Thyroid gland (tissue), 4 donors: ENCODE measurements at regions of chr4 and their contacts with region 1.

Region 1: GRCh38 chr4:76758290-76758882 is 139.6 kb downstream of the SOWAHB start:
- DNase-seq: peak; percentile 27 to 29
- H3K4me3 ChIP-seq: no peak overlapping the region
- H3K27ac ChIP-seq: no peak overlapping the region
- H3K4me1 ChIP-seq: peaks cover 0 to 6% of the 10 kb centered on the region in 2 donors
- H3K27me3 ChIP-seq: no peaks in the 10 kb centered on the region
- CTCF ChIP-seq: peak; percentile 30 to 78 (median 55)
- POLR2A ChIP-seq: no peak

Region 2: DNA sequence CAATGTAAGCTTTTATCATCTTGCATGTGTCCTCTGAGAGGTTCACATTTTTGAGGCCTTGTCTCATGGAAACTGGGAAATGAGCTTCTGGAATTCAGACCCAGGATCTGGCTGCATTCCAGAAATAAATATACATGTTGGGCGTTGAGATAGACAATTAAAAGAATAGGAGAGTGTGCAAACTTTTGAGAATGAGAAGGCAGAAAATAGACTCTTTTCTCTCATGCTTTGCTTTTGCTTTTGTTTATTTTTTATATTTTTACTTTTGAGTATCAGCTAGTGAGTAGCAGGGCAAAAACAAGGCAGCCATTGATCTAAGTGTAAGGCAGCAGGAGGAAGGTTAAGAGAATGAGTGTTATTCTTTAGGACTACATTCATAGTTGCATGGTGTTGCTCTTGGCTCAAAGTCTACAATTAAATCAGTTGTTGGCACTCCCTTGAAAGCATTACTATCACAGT is 311.0 kb before region 1 on chr4:
- intact Hi-C with region 1: loop called (anchors 10 kb)
- DNase-seq: no peak
- H3K4me3 ChIP-seq: no peak overlapping the region
- H3K27ac ChIP-seq: no peak overlapping the region
- H3K4me1 ChIP-seq: peaks cover 0 to 7% of the 10 kb centered on the region in 2 donors
- H3K27me3 ChIP-seq: no peaks in the 10 kb centered on the region
- CTCF ChIP-seq: no peak
- POLR2A ChIP-seq: no peak

Region 3: DNA sequence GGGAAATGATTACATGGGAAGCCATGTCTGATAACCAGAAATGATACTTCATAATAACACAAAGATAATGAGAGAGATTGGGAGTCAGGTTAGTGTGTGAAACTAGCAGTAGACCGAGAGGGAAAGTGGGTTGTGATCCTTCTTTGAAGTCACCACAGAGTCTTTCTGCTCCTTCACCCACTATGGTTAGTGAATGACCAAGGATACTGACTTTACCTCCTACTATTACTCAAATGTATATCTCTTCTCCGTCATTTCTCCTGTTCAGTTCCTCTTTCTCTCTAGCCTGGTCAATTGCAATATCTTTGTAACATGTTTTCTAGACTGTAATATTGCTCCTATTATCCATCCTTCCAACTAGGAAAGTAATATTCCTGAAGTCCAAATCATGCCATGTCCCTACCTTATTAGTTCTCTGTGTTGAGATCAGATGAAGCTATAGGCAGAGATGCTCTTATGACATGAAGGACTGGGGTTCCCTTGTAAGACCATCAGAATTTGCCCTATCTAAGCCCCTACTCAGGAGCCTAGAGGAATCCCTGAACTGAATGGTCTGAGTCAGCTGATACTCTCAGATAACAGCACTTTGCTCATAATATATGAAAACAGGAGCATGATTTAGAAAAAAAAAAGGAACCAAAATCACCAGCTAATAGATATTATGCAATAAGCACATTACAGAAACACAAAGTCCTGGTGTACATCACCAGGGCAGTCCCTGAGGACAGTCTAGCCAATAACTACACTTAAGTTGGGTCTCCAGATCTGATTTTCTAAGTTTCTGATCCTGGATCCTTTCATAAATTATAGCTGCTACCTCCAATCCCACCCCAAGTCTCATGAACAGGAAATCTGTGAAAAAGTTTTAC is 242.2 kb before region 1 on chr4:
- intact Hi-C with region 1: loop called (anchors 10 kb)
- DNase-seq: no peak
- H3K4me3 ChIP-seq: no peak overlapping the region
- H3K27ac ChIP-seq: no peak overlapping the region
- H3K4me1 ChIP-seq: no peaks in the 10 kb centered on the region
- H3K27me3 ChIP-seq: no peaks in the 10 kb centered on the region
- CTCF ChIP-seq: no peak
- POLR2A ChIP-seq: no peak

Region 4: GRCh38 chr4:76811604-76812412 is 53.4 kb after region 1 on chr4:
- intact Hi-C with region 1: no loop called
- DNase-seq: no peak
- H3K4me3 ChIP-seq: no peak overlapping the region
- H3K27ac ChIP-seq: no peak overlapping the region
- H3K4me1 ChIP-seq: no peaks in the 10 kb centered on the region
- H3K27me3 ChIP-seq: no peaks in the 10 kb centered on the region
- CTCF ChIP-seq: no peak
- POLR2A ChIP-seq: no peak